ENCODE measurements at regions of chr5 and their contacts with region 1.

Region 1: GRCh38 chr5:167112556-167112955 is 1178.9 kb upstream of the WWC1 start:
- DNase-seq: no peak
- ATAC-seq: no peak
- H3K4me3 ChIP-seq: no peak overlapping the region
- H3K27ac ChIP-seq: no peak overlapping the region
- H3K4me1 ChIP-seq: no peaks in the 10 kb centered on the region
- H3K27me3 ChIP-seq: no peaks in the 10 kb centered on the region
- CTCF ChIP-seq: no peak
- POLR2A ChIP-seq: no peak

Region 2: DNA sequence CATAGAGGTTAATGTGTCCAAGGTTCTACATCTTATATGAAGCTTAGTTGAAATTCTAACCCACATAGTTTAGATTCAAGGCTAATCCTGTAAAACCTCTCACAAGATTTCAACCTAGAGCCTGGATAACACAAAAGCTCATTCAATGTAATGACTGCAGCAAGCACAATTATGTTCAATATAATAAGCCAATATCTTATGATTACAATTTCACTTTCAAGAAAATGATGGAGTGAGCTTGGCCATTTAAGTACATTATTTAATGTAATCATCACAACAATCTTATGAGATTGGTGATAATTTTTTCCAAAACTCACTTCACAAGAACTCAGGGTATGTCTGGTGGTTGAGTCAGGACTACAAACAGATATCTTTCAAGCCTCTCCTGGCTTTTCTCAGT is 38.1 kb after region 1 on chr5:
- intact Hi-C with region 1: loop called in 1 of 10 experiments (anchors 2 kb)
- DNase-seq: no peak
- ATAC-seq: no peak
- H3K4me3 ChIP-seq: no peak overlapping the region
- H3K27ac ChIP-seq: no peak overlapping the region
- H3K4me1 ChIP-seq: peaks cover 0 to 3% (median 0%) of the 10 kb centered on the region in 12 donors
- H3K27me3 ChIP-seq: no peaks in the 10 kb centered on the region
- CTCF ChIP-seq: no peak
- POLR2A ChIP-seq: no peak

Region 3: GRCh38 chr5:167317712-167318283 is 205.2 kb after region 1 on chr5:
- intact Hi-C with region 1: no loop called
- DNase-seq: no peak
- ATAC-seq: no peak
- H3K4me3 ChIP-seq: no peak overlapping the region
- H3K27ac ChIP-seq: no peak overlapping the region
- H3K4me1 ChIP-seq: no peaks in the 10 kb centered on the region
- H3K27me3 ChIP-seq: no peaks in the 10 kb centered on the region
- CTCF ChIP-seq: no peak
- POLR2A ChIP-seq: no peak

Measured in heart left ventricle (tissue), 16 donors.